Common myeloid progenitor, CD34-positive (primary cell): ENCODE measurements at regions of chr6 and their contacts with region 1.

Region 1: DNA sequence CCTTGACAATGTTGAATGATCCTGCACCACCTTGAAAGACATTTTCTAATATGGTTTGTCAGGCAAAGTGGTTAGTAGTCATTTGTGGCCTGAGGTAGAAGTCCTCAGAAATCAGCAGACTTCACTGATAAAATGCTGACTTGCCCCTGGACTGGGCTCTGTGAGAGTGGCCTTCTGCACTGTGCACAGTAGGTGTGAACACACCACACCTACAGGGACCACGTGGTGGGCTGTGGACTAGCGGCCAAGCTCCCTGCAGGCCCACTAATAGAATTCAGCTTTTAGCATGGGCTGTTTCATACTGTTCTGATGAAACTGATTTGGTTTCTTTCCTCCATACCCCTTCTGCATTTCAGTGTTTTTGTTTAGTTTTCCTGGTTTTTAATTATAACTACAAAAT is 7.3 kb downstream of the BPHL start:
- DNase-seq: no peak
- H3K4me3 ChIP-seq: no peak overlapping the region
- H3K27ac ChIP-seq: no peak overlapping the region
- H3K4me1 ChIP-seq: no peaks in the 10 kb centered on the region
- H3K27me3 ChIP-seq: no peaks in the 10 kb centered on the region

Region 2: GRCh38 chr6:2841264-2842138 is 284.3 kb before region 1 on chr6 and contains the start of gene SERPINB1:
- CTCF ChIA-PET with region 1: no interaction called
- POLR2A ChIA-PET with region 1: no interaction called
- DNase-seq: peak; percentile 86 to 94 (median 91)
- H3K4me3 ChIP-seq: peak within 1 kb of the TSS; percentile 59 to 97 (median 93)
- H3K27ac ChIP-seq: peak within 1 kb of the TSS; percentile 75 to 91
- H3K4me1 ChIP-seq: peaks cover 39 to 61% (median 56%) of the 10 kb centered on the region in 4 experiments
- H3K27me3 ChIP-seq: no peaks in the 10 kb centered on the region

Region 3: GRCh38 chr6:3108746-3109414 is 16.9 kb before region 1 on chr6:
- CTCF ChIA-PET with region 1: no interaction called
- POLR2A ChIA-PET with region 1: no interaction called
- DNase-seq: no peak
- H3K4me3 ChIP-seq: no peak overlapping the region
- H3K27ac ChIP-seq: no peak overlapping the region
- H3K4me1 ChIP-seq: no peaks in the 10 kb centered on the region
- H3K27me3 ChIP-seq: no peaks in the 10 kb centered on the region

Region 4: GRCh38 chr6:3157131-3157927 is 31.5 kb after region 1 on chr6 and contains the start of gene TUBB2A:
- CTCF ChIA-PET with region 1: interaction called, 10 read pairs
- POLR2A ChIA-PET with region 1: no interaction called
- DNase-seq: peak; percentile 65 to 82 (median 74)
- H3K4me3 ChIP-seq: peak within 1 kb of the TSS; percentile 44 to 80 (median 67)
- H3K27ac ChIP-seq: peak within 1 kb of the TSS in 1 of 2 experiments; percentile 49
- H3K4me1 ChIP-seq: peaks cover 0 to 26% (median 21%) of the 10 kb centered on the region in 4 experiments
- H3K27me3 ChIP-seq: peaks cover 0 to 66% (median 18%) of the 10 kb centered on the region in 5 experiments